B cell (primary cell): ENCODE measurements at regions of chr5 and their contacts with region 1.

Region 1: GRCh38 chr5:1536322-1536845 is 12.6 kb upstream of the LPCAT1 start:
- DNase-seq: peak; percentile 89
- ATAC-seq: peak; percentile 96
- H3K4me3 ChIP-seq: peak overlapping the region; percentile 35 to 81 (median 47)
- H3K4me3 Mint-ChIP-seq: peak overlapping the region; percentile 71
- H3K27ac ChIP-seq: peak overlapping the region; percentile 85 to 98
- H3K27ac Mint-ChIP-seq: peak overlapping the region; percentile 95
- H3K4me1 ChIP-seq: peaks cover 19% of the 10 kb centered on the region in 2 donors
- H3K4me1 Mint-ChIP-seq: peaks cover 32% of the 10 kb centered on the region
- H3K27me3 ChIP-seq: no peaks in the 10 kb centered on the region
- H3K27me3 Mint-ChIP-seq: no peaks in the 10 kb centered on the region
- CTCF ChIP-seq: no peak

Region 2: DNA sequence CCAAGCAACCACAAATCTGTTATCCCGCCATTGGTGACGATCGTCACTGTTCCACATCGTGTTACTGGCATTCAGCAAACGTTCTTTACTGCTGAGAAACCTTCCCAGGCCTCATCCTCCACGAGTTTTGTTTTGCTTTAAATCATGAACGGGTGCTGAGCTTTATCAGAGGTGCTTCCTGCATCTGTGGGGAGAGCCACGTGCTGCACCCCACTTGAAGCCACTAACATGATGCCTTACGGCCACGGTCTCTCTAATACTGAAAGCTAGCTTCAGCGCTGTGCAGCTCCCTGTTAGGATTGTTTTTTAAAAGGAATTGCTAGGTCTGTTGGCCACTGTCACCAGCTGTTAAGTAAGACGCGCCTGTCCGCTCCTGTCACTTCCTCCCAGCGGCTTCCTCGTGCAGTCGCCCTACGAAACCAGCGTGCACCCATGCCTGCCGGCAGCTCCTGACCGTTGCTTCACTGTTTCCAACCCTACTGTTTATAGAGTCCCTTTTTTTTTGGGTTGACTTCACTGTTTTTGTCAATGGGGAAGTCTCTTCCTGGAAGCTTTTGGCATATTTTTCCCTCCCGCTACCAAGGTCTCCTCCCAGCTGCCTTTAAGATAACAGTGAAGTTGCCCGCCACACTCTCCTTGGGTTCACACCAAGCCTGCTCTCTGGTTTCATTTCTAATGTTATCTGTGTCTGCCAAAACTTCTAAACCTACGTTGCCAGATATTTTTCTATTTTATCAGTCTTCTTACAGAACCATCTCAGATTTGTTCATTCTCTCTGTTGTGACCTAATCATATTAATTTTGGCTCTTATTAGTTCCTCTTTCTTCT is 32.9 kb before region 1 on chr5:
- CTCF ChIA-PET with region 1: interaction called, 5 read pairs
- POLR2A ChIA-PET with region 1: interaction called, 10 read pairs
- intact Hi-C with region 1: no loop called
- DNase-seq: peak; percentile 81
- ATAC-seq: peak; percentile 34
- H3K4me3 ChIP-seq: peak overlapping the region in 4 of 5 experiments; percentile 5 to 54 (median 40)
- H3K4me3 Mint-ChIP-seq: peak overlapping the region; percentile 83
- H3K27ac ChIP-seq: peak overlapping the region; percentile 91 to 96
- H3K27ac Mint-ChIP-seq: peak overlapping the region; percentile 95
- H3K4me1 ChIP-seq: peaks cover 80 to 89% of the 10 kb centered on the region in 2 donors
- H3K4me1 Mint-ChIP-seq: peaks cover 83% of the 10 kb centered on the region
- H3K27me3 ChIP-seq: no peaks in the 10 kb centered on the region
- H3K27me3 Mint-ChIP-seq: no peaks in the 10 kb centered on the region
- CTCF ChIP-seq: no peak

Region 3: GRCh38 chr5:1523771-1524480 is 12.5 kb before region 1 on chr5 and contains the start of gene LPCAT1:
- CTCF ChIA-PET with region 1: interaction called, 9 read pairs
- POLR2A ChIA-PET with region 1: interaction called, 9 read pairs
- intact Hi-C with region 1: loop called (anchors 1 kb)
- DNase-seq: peak; percentile 88
- ATAC-seq: peak; percentile 85
- H3K4me3 ChIP-seq: peak within 1 kb of the TSS; percentile 32 to 74 (median 64)
- H3K4me3 Mint-ChIP-seq: peak within 1 kb of the TSS; percentile 88
- H3K27ac ChIP-seq: peak within 1 kb of the TSS; percentile 76 to 90
- H3K27ac Mint-ChIP-seq: peak within 1 kb of the TSS; percentile 91
- H3K4me1 ChIP-seq: peaks cover 39 to 53% of the 10 kb centered on the region in 2 donors
- H3K4me1 Mint-ChIP-seq: peaks cover 53% of the 10 kb centered on the region
- H3K27me3 ChIP-seq: no peaks in the 10 kb centered on the region
- H3K27me3 Mint-ChIP-seq: no peaks in the 10 kb centered on the region
- CTCF ChIP-seq: no peak
- total RNA-seq, gene LPCAT1: 152 and 159 TPM in 2 replicates

Region 4: GRCh38 chr5:1594357-1595106 is 58.1 kb after region 1 on chr5:
- CTCF ChIA-PET with region 1: interaction called, 4 read pairs
- POLR2A ChIA-PET with region 1: no interaction called
- intact Hi-C with region 1: loop called (anchors 10 kb)
- DNase-seq: peak; percentile 92
- ATAC-seq: peak; percentile 93
- H3K4me3 ChIP-seq: peak overlapping the region; percentile 11 to 90 (median 78)
- H3K4me3 Mint-ChIP-seq: peak overlapping the region; percentile 86
- H3K27ac ChIP-seq: peak overlapping the region; percentile 68 to 72
- H3K27ac Mint-ChIP-seq: peak overlapping the region; percentile 85
- H3K4me1 ChIP-seq: peaks cover 0 to 12% of the 10 kb centered on the region in 2 donors
- H3K4me1 Mint-ChIP-seq: peaks cover 22% of the 10 kb centered on the region
- H3K27me3 ChIP-seq: no peaks in the 10 kb centered on the region
- H3K27me3 Mint-ChIP-seq: no peaks in the 10 kb centered on the region
- CTCF ChIP-seq: peak; percentile 57